ENCODE measurements at regions of chr12 and their contacts with region 1.

Region 1: DNA sequence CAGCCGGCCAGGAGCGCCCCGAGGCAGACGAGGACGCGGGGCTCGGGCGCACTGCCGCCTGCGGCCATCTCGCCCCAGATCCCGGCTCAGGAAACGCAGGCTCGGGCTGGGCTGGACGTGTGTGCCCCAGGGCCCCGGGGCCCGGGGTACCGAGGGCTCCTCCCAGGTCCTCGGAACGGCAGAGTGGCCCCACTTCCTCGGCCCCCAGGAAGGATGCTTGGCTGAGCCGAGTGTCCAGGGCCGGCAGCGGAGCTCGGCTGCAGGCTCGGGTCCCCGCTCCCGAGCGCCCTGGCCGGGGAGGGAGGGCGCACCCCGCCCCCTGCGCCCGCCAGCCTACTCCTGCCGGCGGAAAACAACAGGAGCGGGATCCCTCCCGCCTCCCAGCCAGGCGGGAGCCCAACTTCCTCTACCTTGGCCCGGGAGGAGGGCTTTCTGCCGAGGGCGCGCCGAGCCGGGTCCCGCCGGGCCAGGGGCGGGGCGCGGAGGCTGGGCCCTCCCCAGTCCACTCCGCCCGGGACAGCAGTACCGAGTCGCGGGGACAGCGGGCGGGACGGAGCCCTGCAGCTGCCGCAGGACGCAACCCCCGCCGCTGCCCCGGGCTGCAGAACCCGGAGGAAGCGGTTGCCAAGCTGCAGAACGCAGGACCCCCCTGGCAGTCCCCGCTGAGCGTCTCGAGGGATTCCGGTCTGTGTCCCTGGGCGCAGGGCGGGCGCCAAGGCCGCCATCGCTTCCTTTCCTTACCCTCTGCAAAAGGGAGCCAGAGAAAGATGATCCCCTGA is at the start of gene VSIG10:
- DNase-seq: peak; percentile 53
- ATAC-seq: peak; percentile 94
- H3K4me3 ChIP-seq: peak within 1 kb of the TSS; percentile 69
- H3K27ac ChIP-seq: peak within 1 kb of the TSS; percentile 68
- H3K4me1 ChIP-seq: 0 out of 2 replicates have a peak, but pooled peaks cover 2% of the 10 kb centered on the region
- H3K27me3 ChIP-seq: no peaks in the 10 kb centered on the region
- CTCF ChIP-seq: no peak
- POLR2A ChIP-seq: no peak
- RAD21 ChIP-seq: no peak
- total RNA-seq, gene VSIG10: 10.0 and 17.5 TPM in 2 replicates

Region 2: GRCh38 chr12:117671734-117672133 is 432.1 kb before region 1 on chr12:
- CTCF ChIA-PET with region 1: no interaction called
- POLR2A ChIA-PET with region 1: no interaction called
- dilution Hi-C with region 1: no loop called
- in situ Hi-C with region 1: no loop called
- intact Hi-C with region 1: no loop called
- DNase-seq: no peak
- ATAC-seq: no peak
- H3K4me3 ChIP-seq: no peak overlapping the region
- H3K27ac ChIP-seq: no peak overlapping the region
- H3K4me1 ChIP-seq: no peaks in the 10 kb centered on the region
- H3K27me3 ChIP-seq: no peaks in the 10 kb centered on the region
- CTCF ChIP-seq: no peak
- POLR2A ChIP-seq: no peak
- RAD21 ChIP-seq: no peak

Region 3: GRCh38 chr12:118061011-118061875 is 42.5 kb before region 1 on chr12 and contains the start of gene WSB2:
- CTCF ChIA-PET with region 1: no interaction called
- POLR2A ChIA-PET with region 1: interaction called, 24 read pairs
- dilution Hi-C with region 1: no loop called
- in situ Hi-C with region 1: no loop called
- intact Hi-C with region 1: no loop called
- DNase-seq: peak; percentile 50
- ATAC-seq: peak; percentile 59
- H3K4me3 ChIP-seq: peak within 1 kb of the TSS; percentile 66
- H3K27ac ChIP-seq: peak within 1 kb of the TSS; percentile 98
- H3K4me1 ChIP-seq: peaks cover 7% of the 10 kb centered on the region
- H3K27me3 ChIP-seq: no peaks in the 10 kb centered on the region
- CTCF ChIP-seq: no peak
- POLR2A ChIP-seq: peak; percentile 68
- RAD21 ChIP-seq: no peak
- total RNA-seq, gene WSB2: 141 and 180 TPM in 2 replicates

Region 4: DNA sequence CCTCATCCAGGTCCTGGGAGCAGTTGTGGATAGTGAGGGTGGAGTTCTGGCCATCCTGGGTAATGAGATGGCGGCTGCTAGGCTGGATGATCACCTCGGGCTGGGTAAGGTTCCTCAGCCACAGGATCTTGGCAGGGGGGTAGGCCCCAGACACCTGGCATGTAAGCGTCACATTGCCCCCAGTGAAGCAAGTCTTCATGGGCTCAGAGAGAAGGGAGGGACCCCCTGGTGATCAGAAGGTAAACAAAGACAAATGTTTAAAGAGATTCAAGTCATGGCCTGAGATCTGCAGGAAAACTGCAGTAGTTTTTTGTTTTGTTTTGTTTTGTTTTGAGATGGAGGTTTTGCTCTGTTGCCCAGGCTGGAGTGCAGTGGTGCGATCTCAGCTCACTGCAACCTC is 30.0 kb before region 1 on chr12:
- CTCF ChIA-PET with region 1: no interaction called
- POLR2A ChIA-PET with region 1: no interaction called
- dilution Hi-C with region 1: no loop called
- in situ Hi-C with region 1: no loop called
- intact Hi-C with region 1: no loop called
- DNase-seq: no peak
- ATAC-seq: no peak
- H3K4me3 ChIP-seq: no peak overlapping the region
- H3K27ac ChIP-seq: no peak overlapping the region
- H3K4me1 ChIP-seq: no peaks in the 10 kb centered on the region
- H3K27me3 ChIP-seq: no peaks in the 10 kb centered on the region
- CTCF ChIP-seq: no peak
- POLR2A ChIP-seq: no peak
- RAD21 ChIP-seq: no peak

Region 5: DNA sequence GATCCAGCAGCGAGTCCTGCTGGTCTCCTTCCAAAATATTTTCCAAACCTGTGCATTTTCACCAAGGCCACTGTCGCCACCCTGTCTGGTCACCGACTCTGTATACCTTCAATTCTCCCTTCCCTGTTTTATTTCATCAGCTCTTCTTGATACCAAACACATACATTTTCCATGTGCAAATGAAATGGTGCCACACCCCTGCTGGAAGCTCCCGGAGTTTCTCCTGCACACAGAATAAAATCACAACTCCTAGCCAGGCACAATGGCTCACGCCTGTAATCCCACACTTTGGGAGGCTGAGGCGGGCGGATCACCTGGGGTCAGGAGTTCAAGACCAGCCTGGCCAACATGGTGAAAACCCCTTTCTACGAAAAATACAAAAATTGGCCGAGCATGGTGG is 14.0 kb before region 1 on chr12:
- CTCF ChIA-PET with region 1: no interaction called
- POLR2A ChIA-PET with region 1: interaction called, 12 read pairs
- dilution Hi-C with region 1: no loop called
- in situ Hi-C with region 1: no loop called
- intact Hi-C with region 1: no loop called
- DNase-seq: no peak
- ATAC-seq: no peak
- H3K4me3 ChIP-seq: no peak overlapping the region
- H3K27ac ChIP-seq: no peak overlapping the region
- H3K4me1 ChIP-seq: no peaks in the 10 kb centered on the region
- H3K27me3 ChIP-seq: no peaks in the 10 kb centered on the region
- CTCF ChIP-seq: no peak
- POLR2A ChIP-seq: no peak
- RAD21 ChIP-seq: no peak

Region 6: DNA sequence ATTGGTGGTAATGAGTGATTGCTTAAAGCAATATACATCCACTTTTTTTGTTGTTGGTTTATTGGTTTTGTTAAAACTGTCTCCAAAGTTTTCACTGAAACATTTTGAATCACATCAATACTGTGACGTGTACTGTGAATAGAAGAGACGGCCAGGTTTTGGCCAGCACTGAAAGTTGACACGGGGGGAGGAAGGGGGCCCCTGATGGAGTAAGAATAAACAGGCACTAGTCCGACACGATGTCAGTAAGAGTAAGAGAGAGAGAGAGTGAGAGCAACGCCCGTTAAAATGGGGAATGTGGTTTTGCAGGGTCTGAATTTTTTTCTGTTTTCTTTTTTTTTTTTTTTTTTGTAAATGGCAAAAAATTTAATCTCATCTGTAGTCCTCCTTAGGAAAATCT is 46.8 kb after region 1 on chr12:
- CTCF ChIA-PET with region 1: no interaction called
- POLR2A ChIA-PET with region 1: no interaction called
- dilution Hi-C with region 1: no loop called
- in situ Hi-C with region 1: no loop called
- intact Hi-C with region 1: no loop called
- DNase-seq: no peak
- ATAC-seq: no peak
- H3K4me3 ChIP-seq: no peak overlapping the region
- H3K27ac ChIP-seq: no peak overlapping the region
- H3K4me1 ChIP-seq: no peaks in the 10 kb centered on the region
- H3K27me3 ChIP-seq: no peaks in the 10 kb centered on the region
- CTCF ChIP-seq: no peak
- POLR2A ChIP-seq: no peak
- RAD21 ChIP-seq: no peak

Region 7: GRCh38 chr12:118830296-118830695 is 726.5 kb after region 1 on chr12:
- CTCF ChIA-PET with region 1: no interaction called
- POLR2A ChIA-PET with region 1: no interaction called
- dilution Hi-C with region 1: no loop called
- in situ Hi-C with region 1: no loop called
- intact Hi-C with region 1: no loop called
- DNase-seq: no peak
- ATAC-seq: no peak
- H3K4me3 ChIP-seq: no peak overlapping the region
- H3K27ac ChIP-seq: no peak overlapping the region
- H3K4me1 ChIP-seq: no peaks in the 10 kb centered on the region
- H3K27me3 ChIP-seq: no peaks in the 10 kb centered on the region
- CTCF ChIP-seq: no peak
- POLR2A ChIP-seq: no peak
- RAD21 ChIP-seq: no peak